CD4-positive, alpha-beta T cell (primary cell): ENCODE measurements at regions of chr12 and their contacts with region 1.

Region 1: DNA sequence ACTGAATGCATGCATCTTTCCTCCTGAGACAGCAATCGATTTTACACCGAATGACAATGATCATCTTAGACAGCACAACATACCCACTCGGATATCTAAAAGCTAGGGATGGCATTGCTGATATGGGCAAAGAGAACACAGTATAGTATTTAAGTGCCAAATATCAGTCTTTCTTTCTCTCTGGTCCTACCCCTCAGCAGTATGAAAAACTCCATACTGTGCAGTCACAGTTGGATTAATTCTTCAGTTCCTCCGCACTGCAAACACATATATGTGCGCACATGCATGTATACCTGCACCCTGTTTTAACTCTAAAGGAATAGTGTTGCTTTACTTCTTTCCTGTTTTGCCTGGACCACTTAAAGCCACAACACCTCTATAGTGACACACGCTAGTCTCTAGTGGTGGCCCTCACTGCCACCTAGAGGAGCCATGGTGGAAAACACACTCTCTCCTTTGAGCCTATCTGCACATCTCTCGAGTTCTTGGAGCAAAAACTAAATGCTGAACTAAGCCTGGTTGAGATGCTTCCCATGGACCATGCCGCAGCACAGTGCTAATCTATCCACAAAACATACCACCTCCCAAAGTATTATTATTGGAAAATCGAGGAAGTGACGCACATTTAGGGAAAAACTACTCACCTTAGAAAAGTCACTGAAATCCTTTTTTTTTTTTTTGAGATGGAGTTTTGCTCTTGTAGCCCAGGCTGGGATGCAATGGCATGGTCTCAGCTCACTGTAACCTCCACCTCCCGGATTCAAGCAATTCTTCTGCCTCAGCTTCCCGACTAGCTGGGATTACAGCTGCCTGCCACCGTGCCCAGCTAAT is 11.9 kb downstream of the TMEM52B start:
- DNase-seq: peak; percentile 23 to 75 (median 40)
- ATAC-seq: peak; percentile 100
- H3K4me3 ChIP-seq: no peak overlapping the region
- H3K4me3 Mint-ChIP-seq: no peak overlapping the region
- H3K27ac ChIP-seq: no peak overlapping the region
- H3K27ac Mint-ChIP-seq: no peak overlapping the region
- H3K4me1 ChIP-seq: no peaks in the 10 kb centered on the region
- H3K4me1 Mint-ChIP-seq: peaks cover 6% of the 10 kb centered on the region
- H3K27me3 ChIP-seq: peaks cover 0 to 6% of the 10 kb centered on the region in 2 experiments
- H3K27me3 Mint-ChIP-seq: peaks cover 25% of the 10 kb centered on the region
- CTCF ChIP-seq: peak; percentile 80

Region 2: DNA sequence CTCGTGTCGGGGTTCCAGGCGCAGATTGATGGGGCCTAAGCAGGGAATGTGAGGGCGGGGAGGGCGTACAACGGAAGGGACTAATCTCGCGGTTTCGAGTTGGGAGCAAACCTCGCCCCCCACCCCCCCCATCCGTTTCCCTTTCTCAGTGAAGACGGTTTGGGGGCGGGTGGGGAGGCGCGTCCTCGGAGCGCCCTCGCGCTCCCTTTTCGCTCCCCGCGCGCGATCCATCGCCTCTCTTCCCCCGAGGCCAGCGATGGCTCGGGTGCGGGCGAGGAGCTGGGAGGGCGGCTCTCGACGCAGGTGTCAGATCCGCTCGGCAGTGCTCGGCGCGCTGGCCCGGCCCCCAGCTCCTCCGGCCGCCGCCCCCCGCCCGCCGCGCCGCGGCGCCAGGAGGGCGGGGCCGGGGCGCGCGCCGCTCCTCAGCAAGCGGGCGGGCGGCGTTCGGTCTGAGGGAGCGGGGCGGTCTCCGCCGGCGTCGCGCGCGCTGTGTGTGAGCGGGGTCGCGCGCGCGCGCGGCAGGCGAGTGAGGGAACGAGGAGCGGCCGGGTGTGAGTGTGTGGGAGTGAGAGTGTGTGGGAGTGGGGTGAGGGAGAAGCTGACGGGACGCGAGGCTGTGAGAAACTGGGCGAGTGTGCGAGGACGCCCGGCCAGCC is 1493.2 kb before region 1 on chr12 and contains the start of gene RIMKLB:
- CTCF ChIA-PET with region 1: no interaction called
- POLR2A ChIA-PET with region 1: no interaction called
- intact Hi-C with region 1: loop called in 1 of 2 experiments (anchors 10 kb)
- DNase-seq: peak; percentile 50 to 92 (median 76)
- ATAC-seq: peak; percentile 79
- H3K4me3 ChIP-seq: peak within 1 kb of the TSS; percentile 72
- H3K4me3 Mint-ChIP-seq: peak within 1 kb of the TSS; percentile 99
- H3K27ac ChIP-seq: peak within 1 kb of the TSS; percentile 32 to 62
- H3K27ac Mint-ChIP-seq: peak within 1 kb of the TSS; percentile 83
- H3K4me1 ChIP-seq: peaks cover 12% of the 10 kb centered on the region
- H3K4me1 Mint-ChIP-seq: peaks cover 46% of the 10 kb centered on the region
- H3K27me3 ChIP-seq: no peaks in the 10 kb centered on the region
- H3K27me3 Mint-ChIP-seq: no peaks in the 10 kb centered on the region
- CTCF ChIP-seq: no peak
- total RNA-seq, gene RIMKLB: 14.8 to 15.2 TPM

Region 3: DNA sequence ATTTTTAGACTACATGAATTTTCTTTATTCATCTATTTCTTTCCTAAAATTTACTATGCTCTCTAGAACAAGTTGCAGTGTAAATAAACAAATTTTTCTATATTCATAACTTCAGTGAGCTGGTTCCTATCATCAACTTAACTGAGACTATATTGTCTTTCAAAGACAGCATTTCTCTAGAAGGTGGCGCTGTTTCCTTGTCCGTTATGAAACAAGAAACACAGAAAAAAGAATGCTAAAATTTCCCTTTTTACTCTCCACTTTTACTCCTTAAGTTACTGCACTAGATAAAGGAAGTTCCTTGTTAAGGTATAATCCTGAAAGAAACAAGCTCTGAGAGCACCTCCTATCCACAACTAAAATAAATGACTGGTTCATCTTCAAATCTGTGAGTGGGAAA is 250.4 kb before region 1 on chr12:
- CTCF ChIA-PET with region 1: no interaction called
- POLR2A ChIA-PET with region 1: no interaction called
- intact Hi-C with region 1: loop called in 1 of 2 experiments (anchors 5 kb)
- DNase-seq: peak in 3 of 14 experiments; percentile 38 to 43 (median 41)
- ATAC-seq: no peak
- H3K4me3 ChIP-seq: no peak overlapping the region
- H3K4me3 Mint-ChIP-seq: no peak overlapping the region
- H3K27ac ChIP-seq: no peak overlapping the region
- H3K27ac Mint-ChIP-seq: no peak overlapping the region
- H3K4me1 ChIP-seq: peaks cover 4% of the 10 kb centered on the region
- H3K4me1 Mint-ChIP-seq: peaks cover 31% of the 10 kb centered on the region
- H3K27me3 ChIP-seq: no peaks in the 10 kb centered on the region
- H3K27me3 Mint-ChIP-seq: peaks cover 4% of the 10 kb centered on the region
- CTCF ChIP-seq: peak; percentile 42

Region 4: GRCh38 chr12:10153271-10154144 is 37.3 kb before region 1 on chr12:
- CTCF ChIA-PET with region 1: interaction called, 14 read pairs
- POLR2A ChIA-PET with region 1: no interaction called
- intact Hi-C with region 1: loop called (anchors 1 kb)
- DNase-seq: peak; percentile 22 to 79 (median 41)
- ATAC-seq: peak; percentile 78
- H3K4me3 ChIP-seq: peak overlapping the region; percentile 63
- H3K4me3 Mint-ChIP-seq: peak overlapping the region; percentile 95
- H3K27ac ChIP-seq: no peak overlapping the region
- H3K27ac Mint-ChIP-seq: peak overlapping the region; percentile 54
- H3K4me1 ChIP-seq: peaks cover 13% of the 10 kb centered on the region
- H3K4me1 Mint-ChIP-seq: peaks cover 9% of the 10 kb centered on the region
- H3K27me3 ChIP-seq: peaks cover 0 to 2% of the 10 kb centered on the region in 2 experiments
- H3K27me3 Mint-ChIP-seq: peaks cover 19% of the 10 kb centered on the region
- CTCF ChIP-seq: peak; percentile 93